PC-9 (cell line): ENCODE measurements at regions of chr19 and their contacts with region 1.

Region 1: GRCh38 chr19:44662691-44663385 is 8.4 kb upstream of the CEACAM19 start:
- DNase-seq: no peak
- H3K4me3 ChIP-seq: no peak overlapping the region
- H3K27ac ChIP-seq: no peak overlapping the region
- H3K4me1 ChIP-seq: no peaks in the 10 kb centered on the region
- H3K27me3 ChIP-seq: no peaks in the 10 kb centered on the region
- CTCF ChIP-seq: no peak

Region 2: GRCh38 chr19:44741841-44742352 is 79.1 kb after region 1 on chr19:
- CTCF ChIA-PET with region 1: interaction called, 19 read pairs
- POLR2A ChIA-PET with region 1: no interaction called
- intact Hi-C with region 1: no loop called
- DNase-seq: peak; percentile 97 to 99
- H3K4me3 ChIP-seq: peak overlapping the region; percentile 44; the same call in 1 of the 2 replicates
- H3K27ac ChIP-seq: peak overlapping the region; percentile 99
- H3K4me1 ChIP-seq: peaks cover 80% of the 10 kb centered on the region
- H3K27me3 ChIP-seq: no peaks in the 10 kb centered on the region
- CTCF ChIP-seq: no peak